ENCODE measurements at regions of chr3 and their contacts with region 1.

Region 1: DNA sequence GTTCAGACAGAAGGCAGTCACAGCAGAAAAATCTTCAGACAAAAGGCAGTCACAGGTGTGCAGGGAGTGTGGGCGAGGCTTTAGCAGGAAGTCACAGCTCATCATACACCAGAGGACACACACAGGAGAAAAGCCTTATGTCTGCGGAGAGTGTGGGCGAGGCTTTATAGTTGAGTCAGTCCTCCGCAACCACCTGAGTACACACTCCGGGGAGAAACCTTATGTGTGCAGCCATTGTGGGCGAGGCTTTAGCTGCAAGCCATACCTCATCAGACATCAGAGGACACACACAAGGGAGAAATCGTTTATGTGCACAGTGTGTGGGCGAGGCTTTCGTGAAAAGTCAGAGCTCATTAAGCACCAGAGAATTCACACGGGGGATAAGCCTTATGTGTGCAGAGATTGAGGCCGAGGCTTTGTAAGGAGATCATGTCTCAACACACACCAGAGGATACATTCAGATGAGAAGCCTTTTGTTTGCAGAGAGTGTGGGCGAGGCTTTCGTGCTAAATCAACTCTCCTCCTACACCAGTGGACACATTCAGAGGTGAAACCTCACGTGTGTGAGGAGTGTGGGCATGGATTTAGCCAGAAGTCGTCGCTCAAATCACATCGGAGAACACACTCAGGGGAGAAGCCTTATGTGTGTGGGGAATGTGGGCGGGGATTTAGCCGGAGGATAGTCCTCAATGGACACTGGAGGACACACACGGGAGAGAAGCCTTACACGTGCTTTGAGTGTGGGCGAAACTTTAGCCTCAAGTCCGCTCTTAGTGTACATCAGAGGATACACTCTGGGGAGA is 27.7 kb downstream of the ZNF589 start:
- DNase-seq: peak; percentile 92
- H3K4me3 Mint-ChIP-seq: peak overlapping the region; percentile 73
- H3K27ac Mint-ChIP-seq: peak overlapping the region; percentile 96
- H3K4me1 Mint-ChIP-seq: peaks cover 37% of the 10 kb centered on the region
- H3K27me3 Mint-ChIP-seq: no peaks in the 10 kb centered on the region

Region 2: GRCh38 chr3:48232734-48233133 is 35.8 kb before region 1 on chr3:
- intact Hi-C with region 1: loop called (anchors 1 kb)
- DNase-seq: peak; percentile 85
- H3K4me3 Mint-ChIP-seq: no peak overlapping the region
- H3K27ac Mint-ChIP-seq: no peak overlapping the region
- H3K4me1 Mint-ChIP-seq: peaks cover 6% of the 10 kb centered on the region
- H3K27me3 Mint-ChIP-seq: peaks cover 2% of the 10 kb centered on the region

Region 3: DNA sequence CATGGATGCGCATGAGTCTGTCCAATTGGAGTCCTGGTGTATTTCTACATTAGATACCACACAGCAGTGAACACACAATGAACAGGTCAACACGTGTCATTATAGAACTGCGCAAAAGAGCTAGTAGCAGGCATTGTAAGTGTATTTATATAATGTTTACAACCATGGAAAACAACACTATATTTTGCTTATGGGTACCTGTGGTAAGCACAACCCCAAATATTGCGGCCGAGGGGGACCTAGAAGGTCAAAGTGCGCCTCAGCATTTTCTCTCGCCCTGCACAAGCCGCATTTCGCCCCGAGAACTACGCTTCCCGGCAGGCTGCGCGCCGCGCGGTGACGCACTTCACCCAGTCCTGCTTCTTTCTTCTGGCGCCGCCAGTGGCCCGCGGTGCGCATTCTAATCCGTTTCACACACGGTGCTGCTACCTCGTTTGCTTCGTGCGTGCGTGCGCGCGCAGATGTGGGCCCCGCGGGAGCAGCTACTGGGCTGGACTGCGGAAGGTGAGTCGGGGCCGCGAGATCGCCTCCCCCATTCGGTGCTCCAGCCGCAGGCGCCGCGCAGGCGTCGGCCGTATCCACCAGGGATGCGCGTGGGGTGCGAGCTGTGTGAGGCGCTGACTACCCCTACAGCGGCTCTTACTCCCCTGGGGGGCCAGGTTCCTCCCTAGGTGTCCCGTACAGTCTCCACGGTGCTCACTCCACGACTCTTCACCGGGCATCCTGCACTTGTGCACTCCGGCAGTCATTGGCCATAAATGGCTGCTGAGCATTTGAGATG is 27.7 kb before region 1 on chr3 and contains the start of gene ZNF589:
- intact Hi-C with region 1: loop called (anchors 1 kb)
- DNase-seq: peak; percentile 98
- H3K4me3 Mint-ChIP-seq: peak within 1 kb of the TSS; percentile 90
- H3K27ac Mint-ChIP-seq: peak within 1 kb of the TSS; percentile 94
- H3K4me1 Mint-ChIP-seq: peaks cover 20% of the 10 kb centered on the region
- H3K27me3 Mint-ChIP-seq: no peaks in the 10 kb centered on the region
- total RNA-seq, gene ZNF589: 38.1 and 39.9 TPM in 2 replicates

Region 4: GRCh38 chr3:48285132-48285531 is 16.6 kb after region 1 on chr3:
- intact Hi-C with region 1: no loop called
- DNase-seq: no peak
- H3K4me3 Mint-ChIP-seq: no peak overlapping the region
- H3K27ac Mint-ChIP-seq: no peak overlapping the region
- H3K4me1 Mint-ChIP-seq: peaks cover 2% of the 10 kb centered on the region
- H3K27me3 Mint-ChIP-seq: no peaks in the 10 kb centered on the region